Breast epithelium (tissue), 4 donors: ENCODE measurements at regions of chr6 and their contacts with region 1.

Region 1: GRCh38 chr6:11496152-11497060 is 41.1 kb upstream of the TMEM170B start:
- DNase-seq: peak in 1 of 2 donors; percentile 44
- H3K4me3 ChIP-seq: no peak overlapping the region
- H3K27ac ChIP-seq: peak overlapping the region in 1 of 2 donors; percentile 40
- H3K4me1 ChIP-seq: peaks cover 0 to 9% of the 10 kb centered on the region in 2 donors
- H3K27me3 ChIP-seq: no peaks in the 10 kb centered on the region
- CTCF ChIP-seq: peak; percentile 91 to 98 (median 97)
- POLR2A ChIP-seq: no peak

Region 2: GRCh38 chr6:11144393-11144851 is 352.0 kb before region 1 on chr6:
- intact Hi-C with region 1: loop called (anchors 5 kb)
- DNase-seq: peak; percentile 70 to 72
- H3K4me3 ChIP-seq: no peak overlapping the region
- H3K27ac ChIP-seq: no peak overlapping the region
- H3K4me1 ChIP-seq: no peaks in the 10 kb centered on the region
- H3K27me3 ChIP-seq: no peaks in the 10 kb centered on the region
- CTCF ChIP-seq: peak; percentile 86 to 94 (median 93)
- POLR2A ChIP-seq: no peak

Region 3: DNA sequence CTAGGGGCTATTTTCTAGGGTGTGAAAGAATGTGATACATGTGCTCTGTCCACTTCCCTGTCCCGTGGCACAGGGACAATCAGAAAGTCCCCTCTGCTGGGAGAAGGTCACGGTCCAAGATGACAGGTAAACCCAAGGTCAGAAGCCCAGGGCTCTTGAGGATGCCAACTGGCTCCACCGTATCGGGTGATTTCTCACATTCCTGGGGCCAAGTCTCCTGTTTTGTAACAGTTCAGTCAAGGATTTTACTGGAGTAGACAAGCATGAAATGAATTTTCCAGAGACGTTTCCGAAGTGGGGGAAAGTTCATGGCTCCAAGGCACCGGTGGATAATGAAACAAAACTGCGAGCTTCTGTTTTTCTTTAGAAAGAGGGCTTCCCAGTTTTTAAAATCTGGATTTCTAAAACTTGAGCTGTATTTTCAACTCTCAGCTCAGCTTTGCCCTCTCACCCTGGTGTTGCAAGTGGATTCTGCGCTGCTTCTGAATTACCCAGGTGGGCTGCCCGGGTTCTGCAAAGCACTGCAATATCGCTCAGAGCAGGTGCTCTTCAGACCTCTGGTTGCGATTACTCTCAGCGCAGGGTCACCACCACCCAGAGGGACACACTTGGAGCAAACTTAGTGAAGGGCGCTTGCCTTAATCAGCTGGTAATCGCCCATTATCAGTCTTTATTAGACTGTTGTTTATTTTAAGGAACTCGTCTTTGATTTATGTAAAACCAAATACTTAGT is 23.2 kb before region 1 on chr6:
- intact Hi-C with region 1: no loop called
- DNase-seq: no peak
- H3K4me3 ChIP-seq: peak overlapping the region; percentile 5 to 41 (median 18)
- H3K27ac ChIP-seq: peak overlapping the region; percentile 35 to 44
- H3K4me1 ChIP-seq: no peaks in the 10 kb centered on the region
- H3K27me3 ChIP-seq: no peaks in the 10 kb centered on the region
- CTCF ChIP-seq: no peak
- POLR2A ChIP-seq: no peak